WTC11 (cell line): ENCODE measurements at regions of chr10 and their contacts with region 1.

Region 1: DNA sequence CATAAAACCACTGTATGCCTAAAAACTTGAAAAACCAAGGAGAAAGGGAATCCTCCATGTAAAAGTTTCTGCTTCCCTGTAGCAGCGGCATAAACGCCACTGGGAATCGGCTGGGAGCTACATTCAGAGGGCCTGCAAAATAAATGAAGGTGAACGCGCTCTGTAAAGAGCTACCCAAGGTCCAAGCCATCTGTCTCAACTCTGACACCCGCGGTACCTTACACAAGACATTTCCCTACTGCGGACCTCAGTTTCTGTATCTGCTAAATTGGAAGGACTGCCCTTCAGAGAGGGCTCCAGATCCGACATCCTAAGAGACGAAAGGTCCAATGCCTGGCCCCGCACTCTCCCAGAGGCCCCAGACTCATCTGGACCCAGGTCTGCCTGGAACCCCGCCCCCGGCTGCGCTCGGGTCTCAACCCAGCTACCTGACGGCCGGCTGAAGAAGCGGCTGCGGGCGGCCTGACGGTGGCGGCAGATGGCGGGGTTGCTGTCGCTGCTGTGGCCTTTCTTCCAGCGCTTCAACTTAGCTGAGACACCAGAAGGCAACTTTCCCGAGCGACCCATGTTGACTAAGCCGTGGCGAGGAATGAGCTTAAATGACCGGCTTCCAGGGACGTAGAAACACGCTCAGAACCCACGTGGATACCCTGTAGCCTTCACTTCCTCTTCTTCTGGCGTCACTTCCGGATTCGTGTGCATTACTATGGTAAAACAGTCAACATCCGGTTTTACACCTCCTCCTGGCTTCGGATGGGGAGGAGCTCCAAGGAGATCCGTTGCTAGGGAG is at the start of gene RRP12:
- DNase-seq: peak; percentile 73
- ATAC-seq: peak; percentile 97
- H3K4me3 Mint-ChIP-seq: peak within 1 kb of the TSS; percentile 90
- H3K27ac Mint-ChIP-seq: peak within 1 kb of the TSS; percentile 84
- H3K4me1 Mint-ChIP-seq: peaks cover 13% of the 10 kb centered on the region
- H3K27me3 Mint-ChIP-seq: no peaks in the 10 kb centered on the region
- CTCF ChIP-seq: no peak
- total RNA-seq, gene RRP12: 44.9 to 56.6 TPM (median 45.6 TPM) in 3 replicates

Region 2: DNA sequence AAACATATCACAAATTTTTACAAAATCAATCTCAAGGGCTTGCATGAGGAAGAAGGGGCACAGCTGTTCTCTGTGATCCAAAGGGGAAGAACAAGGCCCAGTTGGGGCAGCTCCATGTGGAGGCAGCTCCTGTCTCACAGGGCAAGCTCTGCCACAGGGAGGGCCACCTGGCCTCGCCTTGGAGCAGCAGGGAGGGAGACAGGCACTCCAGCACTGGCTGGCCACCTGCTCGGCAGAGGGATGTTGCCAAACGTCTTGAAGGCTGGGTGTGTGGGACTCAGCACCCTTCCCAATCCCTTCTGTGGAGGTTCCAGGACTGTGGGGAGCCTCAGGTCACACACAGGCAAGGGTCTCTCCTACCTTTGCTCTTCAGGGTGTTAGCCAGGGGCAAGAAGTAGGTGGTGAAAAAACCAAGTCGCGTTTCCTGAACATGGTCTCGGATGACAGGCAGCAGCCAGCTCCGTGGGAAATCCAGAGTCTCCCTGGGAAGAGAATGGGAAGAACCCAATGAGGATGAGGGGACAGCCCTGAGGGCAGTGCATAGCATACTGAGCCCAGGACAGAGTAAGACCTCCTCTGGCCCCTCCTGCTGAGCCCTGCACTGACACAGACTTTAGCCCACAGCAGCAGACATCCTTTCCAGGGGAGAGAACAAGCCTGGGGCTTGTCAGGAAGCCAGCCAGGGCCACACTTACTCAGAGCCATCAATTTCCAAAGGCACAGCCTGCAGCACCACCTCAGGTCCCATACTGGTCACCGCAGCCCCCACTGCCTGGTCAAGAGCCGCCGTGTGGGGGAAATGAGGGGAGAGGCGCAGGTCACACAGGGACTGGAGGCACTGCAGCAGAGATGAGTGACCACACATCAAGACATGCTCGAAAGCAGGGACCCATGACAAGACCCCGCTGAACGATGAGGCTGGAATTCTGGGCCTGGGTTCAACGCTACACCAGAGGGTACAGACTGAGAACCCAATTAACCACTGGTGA is 21.6 kb before region 1 on chr10:
- CTCF ChIA-PET with region 1: no interaction called
- POLR2A ChIA-PET with region 1: no interaction called
- DNase-seq: no peak
- ATAC-seq: peak; percentile 16; the same call in 1 of the 2 replicates
- H3K4me3 Mint-ChIP-seq: no peak overlapping the region
- H3K27ac Mint-ChIP-seq: no peak overlapping the region
- H3K4me1 Mint-ChIP-seq: no peaks in the 10 kb centered on the region
- H3K27me3 Mint-ChIP-seq: no peaks in the 10 kb centered on the region
- CTCF ChIP-seq: no peak

Region 3: GRCh38 chr10:97412891-97413304 is 12.0 kb after region 1 on chr10:
- CTCF ChIA-PET with region 1: interaction called, 31 read pairs
- POLR2A ChIA-PET with region 1: no interaction called
- DNase-seq: no peak
- ATAC-seq: no peak
- H3K4me3 Mint-ChIP-seq: no peak overlapping the region
- H3K27ac Mint-ChIP-seq: peak overlapping the region; percentile 14; the same call in 1 of the 2 replicates
- H3K4me1 Mint-ChIP-seq: peaks cover 20% of the 10 kb centered on the region
- H3K27me3 Mint-ChIP-seq: no peaks in the 10 kb centered on the region
- CTCF ChIP-seq: no peak

Region 4: GRCh38 chr10:97425964-97426775 is 25.3 kb after region 1 on chr10 and contains the start of gene PGAM1:
- CTCF ChIA-PET with region 1: interaction called, 31 read pairs
- POLR2A ChIA-PET with region 1: interaction called, 7 read pairs
- DNase-seq: peak; percentile 94
- ATAC-seq: peak; percentile 83
- H3K4me3 Mint-ChIP-seq: peak within 1 kb of the TSS; percentile 95
- H3K27ac Mint-ChIP-seq: peak within 1 kb of the TSS; percentile 95
- H3K4me1 Mint-ChIP-seq: peaks cover 22% of the 10 kb centered on the region
- H3K27me3 Mint-ChIP-seq: no peaks in the 10 kb centered on the region
- CTCF ChIP-seq: 0 out of 2 replicates have a peak, but pooled peaks have one; percentile 21
- total RNA-seq, gene PGAM1: 833 to 990 TPM (median 989 TPM) in 3 replicates

Region 5: DNA sequence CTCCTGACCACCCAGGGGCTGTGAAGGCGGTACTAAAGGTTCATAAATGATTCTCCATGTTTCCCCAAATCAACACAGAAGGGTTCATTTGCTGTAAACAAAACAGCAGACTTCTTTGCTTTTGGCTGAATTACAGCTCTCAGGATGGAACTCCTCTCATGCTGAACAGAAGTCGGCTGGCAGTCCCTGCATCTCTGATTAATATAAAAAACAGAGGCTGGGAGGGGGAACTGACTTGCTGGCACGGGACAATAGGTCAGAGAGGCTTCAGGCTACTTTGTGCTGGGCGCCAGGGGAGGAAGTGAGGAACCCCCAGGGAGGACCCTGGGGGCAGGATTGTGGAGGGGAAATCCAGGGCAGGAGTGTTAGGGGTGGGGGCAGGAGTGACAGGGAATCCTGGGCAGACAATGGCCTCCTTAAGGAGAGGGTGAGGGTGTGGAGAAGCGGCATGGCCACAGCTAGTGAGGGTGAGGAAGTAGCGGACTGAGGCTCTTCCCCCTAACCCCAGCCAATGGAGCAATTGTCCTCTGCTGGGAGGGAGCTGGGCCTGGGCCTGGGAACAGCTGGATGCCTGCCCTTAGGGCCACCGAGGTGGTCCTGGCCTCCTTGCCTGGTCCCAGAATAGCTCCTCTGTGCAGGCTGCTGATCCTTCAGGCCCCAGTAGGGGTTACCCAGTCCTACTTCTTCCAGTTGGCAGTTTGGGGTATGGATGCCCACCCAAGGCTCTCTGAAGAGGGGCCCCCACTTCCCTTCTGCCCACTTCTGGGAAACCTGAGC is 380.2 kb after region 1 on chr10:
- CTCF ChIA-PET with region 1: no interaction called
- POLR2A ChIA-PET with region 1: no interaction called
- DNase-seq: no peak
- ATAC-seq: no peak
- H3K4me3 Mint-ChIP-seq: no peak overlapping the region
- H3K27ac Mint-ChIP-seq: 0 out of 2 replicates have a peak overlapping the region, but pooled peaks have one; percentile 11
- H3K4me1 Mint-ChIP-seq: peaks cover 22% of the 10 kb centered on the region
- H3K27me3 Mint-ChIP-seq: no peaks in the 10 kb centered on the region
- CTCF ChIP-seq: no peak